Activated CD4-positive, alpha-beta memory T cell treated with anti-CD3 and anti-CD28 coated beads for 36 hours (primary cell): ENCODE measurements at regions of chr3 and their contacts with region 1.

Region 1: DNA sequence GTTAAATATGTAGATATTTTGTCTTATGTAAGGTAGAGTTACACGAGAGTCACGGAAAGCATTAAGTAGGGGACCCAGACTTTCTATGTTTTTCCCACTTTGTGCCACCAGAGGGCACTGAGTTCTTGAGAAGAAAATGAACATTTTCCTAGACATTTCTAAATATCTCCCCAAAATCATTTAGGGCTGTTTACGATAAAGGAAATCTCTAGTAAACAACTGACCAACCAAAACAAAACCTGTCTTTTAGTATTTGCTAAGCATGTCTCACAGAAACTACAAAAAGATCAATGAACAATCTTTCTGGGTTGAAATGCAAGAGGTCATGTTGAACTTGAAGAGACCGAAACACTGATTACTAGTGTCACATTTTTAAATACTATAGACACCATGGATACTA is 16.1 kb downstream of the POU1F1 start:
- DNase-seq: peak; percentile 40
- H3K4me3 Mint-ChIP-seq: no peak overlapping the region
- H3K27ac Mint-ChIP-seq: no peak overlapping the region
- H3K4me1 Mint-ChIP-seq: peaks cover 3% of the 10 kb centered on the region
- H3K27me3 Mint-ChIP-seq: no peaks in the 10 kb centered on the region

Region 2: DNA sequence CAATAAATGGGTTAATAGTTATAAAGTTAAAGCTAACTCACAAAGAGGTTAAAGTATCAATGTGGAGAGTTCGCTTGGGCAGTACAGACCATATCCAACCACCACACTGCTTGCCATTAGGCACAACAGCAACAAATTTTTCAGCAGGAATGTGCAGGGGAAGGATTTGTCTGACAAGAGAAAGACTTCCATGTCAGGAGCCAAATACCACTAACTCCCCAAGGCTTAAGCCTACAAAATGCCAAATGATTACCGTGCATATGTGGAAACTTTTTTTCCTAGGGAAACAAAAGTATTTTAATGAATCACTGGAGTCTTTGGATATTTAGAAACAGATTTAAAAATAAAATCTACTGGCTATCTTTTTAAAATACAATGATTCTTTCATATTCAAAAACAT is 277.4 kb before region 1 on chr3:
- CTCF ChIA-PET with region 1: no interaction called
- POLR2A ChIA-PET with region 1: no interaction called
- intact Hi-C with region 1: no loop called
- DNase-seq: no peak
- H3K4me3 Mint-ChIP-seq: no peak overlapping the region
- H3K27ac Mint-ChIP-seq: no peak overlapping the region
- H3K4me1 Mint-ChIP-seq: no peaks in the 10 kb centered on the region
- H3K27me3 Mint-ChIP-seq: peaks cover 1% of the 10 kb centered on the region

Region 3: DNA sequence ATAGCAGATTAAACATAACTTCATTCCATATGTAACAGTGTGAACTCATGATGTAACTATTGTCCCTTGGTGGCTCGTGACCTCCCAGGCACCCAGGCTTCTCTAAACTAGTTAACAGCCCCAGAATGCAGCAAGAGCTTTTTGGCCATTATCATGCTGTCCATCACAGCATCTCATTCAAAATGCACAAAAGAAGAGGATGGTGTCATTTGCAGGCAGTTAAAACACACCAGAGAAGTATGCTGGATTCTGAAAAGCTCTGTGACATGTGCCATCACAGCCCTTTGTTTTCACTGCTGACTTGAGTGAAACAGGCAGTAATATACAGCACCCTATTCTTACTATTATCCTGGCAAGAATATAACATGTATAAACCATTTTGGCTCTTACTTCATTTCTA is 150.8 kb before region 1 on chr3:
- CTCF ChIA-PET with region 1: no interaction called
- POLR2A ChIA-PET with region 1: no interaction called
- intact Hi-C with region 1: no loop called
- DNase-seq: no peak
- H3K4me3 Mint-ChIP-seq: no peak overlapping the region
- H3K27ac Mint-ChIP-seq: no peak overlapping the region
- H3K4me1 Mint-ChIP-seq: no peaks in the 10 kb centered on the region
- H3K27me3 Mint-ChIP-seq: no peaks in the 10 kb centered on the region

Region 4: DNA sequence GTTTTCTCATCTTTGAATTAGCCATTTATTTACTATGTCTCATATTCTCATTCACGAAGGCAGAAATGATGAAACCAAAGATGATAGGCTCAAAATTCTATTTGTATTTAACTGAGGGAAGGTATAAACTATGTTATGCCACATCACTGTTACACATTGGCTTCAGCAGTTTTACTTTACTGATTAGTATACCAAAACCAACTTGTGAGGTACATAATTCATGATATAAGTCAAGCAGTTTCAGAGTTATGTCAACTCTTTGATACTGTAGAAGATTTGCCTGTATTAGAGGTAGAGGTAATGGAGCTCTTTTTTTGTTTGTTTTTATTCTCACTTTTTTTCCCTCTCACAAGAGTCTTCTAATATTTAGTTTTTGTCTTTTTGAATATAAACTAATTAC is 10.3 kb before region 1 on chr3:
- CTCF ChIA-PET with region 1: interaction called, 17 read pairs
- POLR2A ChIA-PET with region 1: no interaction called
- intact Hi-C with region 1: no loop called
- DNase-seq: no peak
- H3K4me3 Mint-ChIP-seq: no peak overlapping the region
- H3K27ac Mint-ChIP-seq: no peak overlapping the region
- H3K4me1 Mint-ChIP-seq: peaks cover 8% of the 10 kb centered on the region
- H3K27me3 Mint-ChIP-seq: no peaks in the 10 kb centered on the region

Region 5: DNA sequence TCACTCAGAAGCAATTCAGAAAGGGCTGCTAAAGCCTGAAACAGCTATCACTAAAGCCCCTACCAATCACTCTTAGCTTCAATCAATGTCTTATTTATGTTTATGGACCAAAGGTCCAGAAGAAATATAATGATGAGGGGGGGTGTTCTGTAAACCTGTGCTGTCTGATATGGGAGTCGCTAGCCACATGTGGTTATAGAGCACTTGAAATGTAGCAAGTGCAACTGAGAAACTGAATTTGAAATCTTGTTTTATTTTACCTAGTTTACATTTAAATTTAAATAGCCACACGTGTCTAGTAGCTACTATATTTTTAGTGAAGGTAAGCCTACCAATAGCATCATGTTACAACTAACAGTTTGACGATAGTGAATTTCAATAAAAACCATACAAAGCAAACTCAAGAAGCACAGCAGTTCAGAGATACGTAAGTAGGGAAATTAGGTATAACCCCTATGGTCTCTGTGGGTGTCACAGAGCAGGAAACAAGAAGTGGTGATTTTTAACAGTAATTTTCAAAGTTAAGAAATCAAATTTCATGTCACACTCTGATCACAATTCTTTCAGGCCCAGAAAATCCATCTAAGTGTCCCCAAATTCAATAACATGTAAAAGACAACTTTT is 12.6 kb after region 1 on chr3:
- CTCF ChIA-PET with region 1: interaction called, 29 read pairs
- POLR2A ChIA-PET with region 1: interaction called, 3 read pairs
- intact Hi-C with region 1: no loop called
- DNase-seq: no peak
- H3K4me3 Mint-ChIP-seq: no peak overlapping the region
- H3K27ac Mint-ChIP-seq: no peak overlapping the region
- H3K4me1 Mint-ChIP-seq: peaks cover 26% of the 10 kb centered on the region
- H3K27me3 Mint-ChIP-seq: peaks cover 7% of the 10 kb centered on the region

Region 6: DNA sequence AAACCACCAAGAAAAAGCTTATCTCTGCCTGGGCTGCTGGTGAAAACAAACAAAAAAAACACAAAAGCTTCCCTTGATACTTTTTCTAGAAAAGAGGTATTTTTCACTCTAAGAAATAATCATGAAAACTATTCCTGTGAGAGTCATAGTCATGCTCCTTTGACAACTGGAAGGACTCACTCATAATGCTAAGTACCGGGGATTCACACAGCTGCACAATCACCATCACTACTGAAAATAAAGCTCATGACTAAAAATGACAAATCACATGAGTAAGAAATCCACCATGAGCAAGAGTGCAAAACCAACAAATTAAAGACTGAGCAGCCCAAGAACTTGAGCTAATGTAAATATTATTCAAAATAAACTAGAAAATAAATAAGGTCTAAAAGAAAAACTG is 26.7 kb after region 1 on chr3:
- CTCF ChIA-PET with region 1: interaction called, 14 read pairs
- POLR2A ChIA-PET with region 1: no interaction called
- intact Hi-C with region 1: no loop called
- DNase-seq: no peak
- H3K4me3 Mint-ChIP-seq: no peak overlapping the region
- H3K27ac Mint-ChIP-seq: no peak overlapping the region
- H3K4me1 Mint-ChIP-seq: peaks cover 3% of the 10 kb centered on the region
- H3K27me3 Mint-ChIP-seq: peaks cover 5% of the 10 kb centered on the region

Region 7: DNA sequence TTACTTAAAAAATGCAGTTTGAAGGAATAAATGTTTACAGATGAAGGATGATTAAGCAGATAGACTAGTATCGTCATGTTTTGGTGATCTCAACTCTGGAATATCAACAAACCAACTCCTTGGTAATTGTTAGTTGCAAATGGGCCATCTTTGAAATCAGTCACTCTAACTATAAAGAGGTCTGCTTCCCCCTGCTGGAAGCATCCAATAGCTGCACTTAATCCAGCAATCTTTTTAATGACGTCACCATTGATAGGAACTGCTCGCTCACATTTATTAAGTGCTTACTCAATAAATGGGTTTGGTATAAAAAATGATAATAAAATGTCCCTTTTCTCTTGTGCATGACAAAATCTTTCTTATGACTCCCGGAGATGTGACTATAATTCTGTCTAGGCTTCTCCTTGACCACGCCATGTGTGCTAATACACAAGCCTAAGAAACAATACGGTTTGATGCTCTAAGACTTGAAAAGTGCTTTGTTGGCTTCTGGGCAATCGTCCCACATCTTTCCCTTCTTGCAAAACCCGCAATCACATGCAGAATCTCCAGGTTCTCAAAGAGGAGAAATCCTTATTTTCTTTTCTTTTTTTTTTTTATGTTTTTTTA is 243.7 kb after region 1 on chr3:
- CTCF ChIA-PET with region 1: interaction called, 22 read pairs
- POLR2A ChIA-PET with region 1: no interaction called
- intact Hi-C with region 1: loop called (anchors 5 kb)
- DNase-seq: peak; percentile 10
- H3K4me3 Mint-ChIP-seq: no peak overlapping the region
- H3K27ac Mint-ChIP-seq: no peak overlapping the region
- H3K4me1 Mint-ChIP-seq: no peaks in the 10 kb centered on the region
- H3K27me3 Mint-ChIP-seq: no peaks in the 10 kb centered on the region